Natural killer cell (primary cell): ENCODE measurements at regions of chr16 and their contacts with region 1.

Region 1: DNA sequence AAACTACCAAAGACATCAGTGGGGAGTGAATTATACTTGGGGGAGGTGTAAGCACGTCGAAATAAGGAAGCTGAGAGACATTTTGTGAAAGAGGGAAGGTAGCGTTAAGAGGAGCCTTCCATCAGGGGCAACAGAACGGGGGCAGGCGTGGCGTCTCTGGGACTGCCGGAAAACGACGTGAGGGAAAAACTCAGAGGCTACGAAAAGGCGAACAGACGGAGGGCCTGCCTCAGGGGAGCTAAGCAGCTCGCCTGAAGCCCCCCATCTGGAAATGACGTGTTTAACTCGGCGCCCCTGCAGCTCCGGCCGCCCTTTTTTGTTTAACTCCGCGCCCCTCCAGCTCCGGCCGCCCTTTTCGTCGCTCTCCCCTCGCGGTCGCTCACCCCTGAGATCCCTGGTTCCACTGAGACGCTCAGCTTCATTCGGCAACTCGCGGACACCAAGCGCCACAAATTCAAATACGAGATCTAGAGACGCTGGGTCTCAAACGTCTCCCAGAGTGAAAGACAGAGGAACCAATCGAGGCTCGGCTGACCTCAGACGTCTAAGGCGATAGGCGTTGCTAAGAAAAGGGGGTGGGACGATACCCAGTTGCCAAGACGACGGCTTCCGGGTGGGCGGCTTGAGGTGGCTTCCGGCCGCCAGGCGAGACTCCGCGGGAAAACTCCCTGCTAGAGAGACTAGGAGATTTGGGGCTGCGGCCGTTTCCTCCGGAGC is 383.3 kb downstream of the ZFHX3 start:
- DNase-seq: peak; percentile 90 to 98
- ATAC-seq: peak; percentile 99 to 100 (median 99)
- H3K4me3 ChIP-seq: peak overlapping the region; percentile 87
- H3K4me3 Mint-ChIP-seq: peak overlapping the region; percentile 99
- H3K27ac ChIP-seq: peak overlapping the region; percentile 67
- H3K27ac Mint-ChIP-seq: peak overlapping the region; percentile 89 to 92
- H3K4me1 ChIP-seq: peaks cover 5% of the 10 kb centered on the region
- H3K4me1 Mint-ChIP-seq: peaks cover 19 to 20% of the 10 kb centered on the region in 2 donors
- H3K27me3 ChIP-seq: no peaks in the 10 kb centered on the region
- H3K27me3 Mint-ChIP-seq: no peaks in the 10 kb centered on the region
- CTCF ChIP-seq: no peak

Region 2: DNA sequence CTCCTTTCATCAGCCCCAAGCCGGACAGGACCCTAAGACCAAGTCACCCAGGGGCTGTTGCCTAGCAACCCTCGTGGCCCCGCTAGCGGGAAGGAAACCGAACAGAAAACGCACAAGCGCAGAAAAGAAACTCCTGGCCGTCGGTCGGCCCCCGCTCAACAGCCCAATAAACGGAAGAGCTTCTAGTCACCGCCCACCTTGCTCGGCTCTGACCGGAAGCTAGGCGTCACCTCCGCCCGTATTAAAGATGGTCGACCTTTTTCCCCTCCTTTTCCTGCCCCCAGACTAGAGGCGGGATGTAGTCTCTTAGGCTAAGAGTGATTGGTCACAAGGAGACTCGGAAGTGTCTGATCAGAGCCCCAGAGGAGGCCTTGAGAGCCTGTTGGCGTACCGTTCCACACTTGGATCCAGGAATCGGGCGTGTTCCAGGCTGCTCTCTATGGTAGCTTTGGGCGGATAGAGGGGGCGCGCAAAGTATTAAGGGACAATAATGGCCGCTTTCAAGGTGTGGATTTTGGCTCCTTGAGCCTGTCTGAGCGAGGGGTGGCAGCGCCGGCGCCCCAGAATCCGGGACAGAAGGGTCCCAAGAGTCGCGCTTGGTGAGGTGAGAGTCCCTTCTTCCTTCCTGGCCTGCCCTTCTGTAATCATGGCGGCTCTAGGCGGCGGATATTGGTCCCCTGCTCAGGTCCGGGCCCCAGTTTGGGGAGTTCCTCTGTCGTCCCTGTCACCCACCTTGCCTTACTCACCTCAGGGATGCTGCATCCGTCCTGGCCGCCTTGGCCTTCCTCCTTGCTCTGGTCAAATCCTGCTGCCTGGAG is 571.0 kb before region 1 on chr16 and contains the starts of genes DHX38 and TXNL4B:
- intact Hi-C with region 1: loop called (anchors 10 kb)
- DNase-seq: peak; percentile 86 to 97
- ATAC-seq: peak; percentile 94 to 99 (median 95)
- H3K4me3 ChIP-seq: peak within 1 kb of the TSS; percentile 77
- H3K4me3 Mint-ChIP-seq: peak within 1 kb of the TSS; percentile 98
- H3K27ac ChIP-seq: peak within 1 kb of the TSS; percentile 87
- H3K27ac Mint-ChIP-seq: peak within 1 kb of the TSS; percentile 93 to 96
- H3K4me1 ChIP-seq: peaks cover 24% of the 10 kb centered on the region
- H3K4me1 Mint-ChIP-seq: peaks cover 64 to 74% of the 10 kb centered on the region in 2 donors
- H3K27me3 ChIP-seq: no peaks in the 10 kb centered on the region
- H3K27me3 Mint-ChIP-seq: no peaks in the 10 kb centered on the region
- CTCF ChIP-seq: no peak
- total RNA-seq, gene DHX38: 120 to 124 (median 120) TPM
- total RNA-seq, gene TXNL4B: 12.1 to 13.8 (median 13.6) TPM

Region 3: GRCh38 chr16:74296432-74297144 is 1631.9 kb after region 1 on chr16 and contains the start of gene PSMD7:
- intact Hi-C with region 1: loop called (anchors 10 kb)
- DNase-seq: peak; percentile 88 to 93
- ATAC-seq: peak; percentile 92 to 97 (median 95)
- H3K4me3 ChIP-seq: peak within 1 kb of the TSS; percentile 95
- H3K4me3 Mint-ChIP-seq: peak within 1 kb of the TSS; percentile 98
- H3K27ac ChIP-seq: peak within 1 kb of the TSS; percentile 93
- H3K27ac Mint-ChIP-seq: peak within 1 kb of the TSS; percentile 97 to 98
- H3K4me1 ChIP-seq: peaks cover 14% of the 10 kb centered on the region
- H3K4me1 Mint-ChIP-seq: peaks cover 14 to 20% of the 10 kb centered on the region in 2 donors
- H3K27me3 ChIP-seq: no peaks in the 10 kb centered on the region
- H3K27me3 Mint-ChIP-seq: no peaks in the 10 kb centered on the region
- CTCF ChIP-seq: no peak
- total RNA-seq, gene PSMD7: 81.0 to 89.2 (median 81.7) TPM